Panc1 (cell line): ENCODE measurements at regions of chr7 and their contacts with region 1.

Region 1: GRCh38 chr7:30974605-30975255 is 11.0 kb downstream of the GHRHR start:
- DNase-seq: no peak
- ATAC-seq: peak; percentile 79
- H3K4me3 ChIP-seq: no peak overlapping the region
- H3K27ac ChIP-seq: no peak overlapping the region
- H3K4me1 ChIP-seq: peaks cover 8% of the 10 kb centered on the region; the same call in 1 of the 2 replicates
- H3K27me3 ChIP-seq: peaks cover 12% of the 10 kb centered on the region
- CTCF ChIP-seq: peak; percentile 84

Region 2: GRCh38 chr7:30938435-30939316 is 36.1 kb before region 1 on chr7:
- CTCF ChIA-PET with region 1: interaction called, 13 read pairs
- POLR2A ChIA-PET with region 1: no interaction called
- in situ Hi-C with region 1: no loop called
- intact Hi-C with region 1: no loop called
- DNase-seq: peak; percentile 73
- ATAC-seq: peak; percentile 97
- H3K4me3 ChIP-seq: peak overlapping the region in 1 of 2 experiments; percentile 3; a peak in 1 of 4 replicates
- H3K27ac ChIP-seq: no peak overlapping the region
- H3K4me1 ChIP-seq: no peaks in the 10 kb centered on the region
- H3K27me3 ChIP-seq: peaks cover 29% of the 10 kb centered on the region
- CTCF ChIP-seq: peak; percentile 100